ENCODE measurements at regions of chr7 and their contacts with region 1.

Region 1: DNA sequence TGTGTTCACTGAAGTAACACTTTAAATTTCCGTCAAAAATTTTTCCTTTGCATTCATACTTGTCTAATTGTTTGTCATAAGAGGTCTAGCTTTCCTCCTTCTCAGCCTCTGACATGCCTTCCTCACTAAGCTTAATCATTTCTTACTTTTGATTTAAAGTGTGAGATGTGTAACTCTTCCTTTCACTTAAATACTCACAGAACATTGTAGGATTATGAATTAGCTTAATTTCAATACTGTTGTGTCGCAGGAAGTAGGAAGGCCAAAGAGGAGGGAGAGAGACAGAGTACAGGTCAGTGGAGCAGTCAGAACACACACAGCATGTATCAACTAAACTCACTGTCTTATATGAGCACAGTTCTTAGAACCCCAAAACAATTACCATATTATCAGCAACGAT is 99.0 kb downstream of the SRPK2 start:
- DNase-seq: peak; percentile 40
- H3K4me3 Mint-ChIP-seq: no peak overlapping the region
- H3K27ac Mint-ChIP-seq: peak overlapping the region; percentile 14
- H3K4me1 Mint-ChIP-seq: peaks cover 21% of the 10 kb centered on the region
- H3K27me3 Mint-ChIP-seq: no peaks in the 10 kb centered on the region

Region 2: DNA sequence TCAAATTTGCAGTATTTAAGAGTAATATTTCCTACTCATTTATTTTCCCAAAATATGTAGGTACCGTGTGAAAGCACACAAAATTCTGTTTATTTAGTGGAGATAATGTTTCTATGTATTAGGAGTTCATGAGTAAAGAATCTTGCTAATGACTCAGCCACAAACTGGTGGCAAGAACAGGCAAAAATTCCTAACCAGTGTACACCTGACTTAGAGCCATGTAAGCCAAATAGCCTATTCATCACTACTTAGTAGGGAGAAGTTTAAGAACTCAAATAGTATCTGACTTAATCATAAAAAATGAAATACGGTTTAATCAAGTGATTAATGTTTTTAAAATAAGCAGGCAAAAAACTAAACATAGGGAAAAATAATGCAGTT is 69.9 kb before region 1 on chr7:
- CTCF ChIA-PET with region 1: no interaction called
- intact Hi-C with region 1: no loop called
- DNase-seq: no peak
- H3K4me3 Mint-ChIP-seq: no peak overlapping the region
- H3K27ac Mint-ChIP-seq: no peak overlapping the region
- H3K4me1 Mint-ChIP-seq: peaks cover 30% of the 10 kb centered on the region
- H3K27me3 Mint-ChIP-seq: no peaks in the 10 kb centered on the region

Region 3: GRCh38 chr7:105261688-105262087 is 28.0 kb before region 1 on chr7:
- CTCF ChIA-PET with region 1: no interaction called
- intact Hi-C with region 1: no loop called
- DNase-seq: no peak
- H3K4me3 Mint-ChIP-seq: no peak overlapping the region
- H3K27ac Mint-ChIP-seq: no peak overlapping the region
- H3K4me1 Mint-ChIP-seq: peaks cover 45% of the 10 kb centered on the region
- H3K27me3 Mint-ChIP-seq: no peaks in the 10 kb centered on the region

Region 4: DNA sequence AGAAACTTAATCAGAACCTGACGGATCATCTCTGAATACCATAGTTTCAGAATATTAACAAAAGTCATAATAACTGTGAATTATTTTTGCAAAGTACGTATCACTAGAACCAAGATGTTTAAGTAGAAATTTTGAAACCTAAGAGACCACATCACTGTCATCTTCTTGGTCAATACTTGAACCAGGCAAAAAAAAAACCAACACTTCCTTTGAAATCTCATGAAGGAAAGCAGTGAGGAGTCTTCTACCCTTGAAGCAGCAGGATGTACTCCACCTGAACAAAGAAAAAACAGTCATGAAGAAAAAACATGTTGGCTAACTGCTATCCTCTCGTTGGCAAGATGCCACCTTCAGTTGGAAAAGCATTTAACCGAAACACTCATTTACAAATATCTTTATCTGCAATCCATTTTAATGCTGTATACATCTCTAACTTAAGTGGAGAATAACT is 16.6 kb after region 1 on chr7:
- CTCF ChIA-PET with region 1: no interaction called
- intact Hi-C with region 1: loop called (anchors 1 kb)
- DNase-seq: peak; percentile 39
- H3K4me3 Mint-ChIP-seq: peak overlapping the region; percentile 16
- H3K27ac Mint-ChIP-seq: peak overlapping the region; percentile 14
- H3K4me1 Mint-ChIP-seq: peaks cover 63% of the 10 kb centered on the region
- H3K27me3 Mint-ChIP-seq: no peaks in the 10 kb centered on the region

Measured in activated naive CD4-positive, alpha-beta T cell treated with anti-CD3 and anti-CD28 coated beads for 36 hours (primary cell).